ENCODE measurements at regions of chr17 and their contacts with region 1.

Region 1: DNA sequence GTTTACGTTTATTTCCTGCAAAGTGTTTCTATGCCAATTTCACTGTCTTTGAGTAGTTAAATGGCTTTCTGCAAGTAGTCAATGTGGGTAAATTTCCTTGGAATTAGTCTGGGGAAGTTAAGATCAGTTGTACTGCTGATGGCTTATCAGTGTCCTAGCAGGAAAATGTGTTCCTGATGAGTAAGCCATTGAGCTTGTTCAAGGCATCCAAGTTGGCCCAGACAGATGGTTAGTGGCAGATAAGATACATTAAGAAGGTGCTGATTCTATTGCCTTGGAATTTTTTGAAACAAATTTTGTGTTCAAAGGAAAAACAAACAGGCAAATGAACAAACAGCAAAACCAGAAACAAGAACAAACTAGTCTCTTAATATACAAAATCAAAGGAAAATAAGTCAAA is 258.4 kb downstream of the MAP2K6 start:
- DNase-seq: peak; percentile 46
- ATAC-seq: peak; percentile 31
- H3K4me3 ChIP-seq: no peak overlapping the region
- H3K27ac ChIP-seq: no peak overlapping the region
- H3K4me1 ChIP-seq: peaks cover 7% of the 10 kb centered on the region
- H3K27me3 ChIP-seq: no peaks in the 10 kb centered on the region
- CTCF ChIP-seq: no peak

Region 2: GRCh38 chr17:69711541-69711940 is 38.6 kb after region 1 on chr17:
- CTCF ChIA-PET with region 1: interaction called, 12 read pairs
- POLR2A ChIA-PET with region 1: no interaction called
- intact Hi-C with region 1: no loop called
- DNase-seq: no peak
- ATAC-seq: no peak
- H3K4me3 ChIP-seq: no peak overlapping the region
- H3K27ac ChIP-seq: no peak overlapping the region
- H3K4me1 ChIP-seq: peaks cover 11% of the 10 kb centered on the region; the same call in 1 of the 2 replicates
- H3K27me3 ChIP-seq: no peaks in the 10 kb centered on the region
- CTCF ChIP-seq: no peak